Breast epithelium (tissue), 4 donors: ENCODE measurements at regions of chr17 and their contacts with region 1.

Region 1: GRCh38 chr17:64320613-64321553 is 57.8 kb upstream of the TEX2 start:
- DNase-seq: peak in 1 of 2 donors; percentile 47
- H3K4me3 ChIP-seq: peak overlapping the region in 1 of 3 donors; percentile 52
- H3K27ac ChIP-seq: peak overlapping the region; percentile 17 to 78
- H3K4me1 ChIP-seq: no peaks in the 10 kb centered on the region
- H3K27me3 ChIP-seq: no peaks in the 10 kb centered on the region
- CTCF ChIP-seq: peak; percentile 80 to 83 (median 83)
- POLR2A ChIP-seq: no peak

Region 2: DNA sequence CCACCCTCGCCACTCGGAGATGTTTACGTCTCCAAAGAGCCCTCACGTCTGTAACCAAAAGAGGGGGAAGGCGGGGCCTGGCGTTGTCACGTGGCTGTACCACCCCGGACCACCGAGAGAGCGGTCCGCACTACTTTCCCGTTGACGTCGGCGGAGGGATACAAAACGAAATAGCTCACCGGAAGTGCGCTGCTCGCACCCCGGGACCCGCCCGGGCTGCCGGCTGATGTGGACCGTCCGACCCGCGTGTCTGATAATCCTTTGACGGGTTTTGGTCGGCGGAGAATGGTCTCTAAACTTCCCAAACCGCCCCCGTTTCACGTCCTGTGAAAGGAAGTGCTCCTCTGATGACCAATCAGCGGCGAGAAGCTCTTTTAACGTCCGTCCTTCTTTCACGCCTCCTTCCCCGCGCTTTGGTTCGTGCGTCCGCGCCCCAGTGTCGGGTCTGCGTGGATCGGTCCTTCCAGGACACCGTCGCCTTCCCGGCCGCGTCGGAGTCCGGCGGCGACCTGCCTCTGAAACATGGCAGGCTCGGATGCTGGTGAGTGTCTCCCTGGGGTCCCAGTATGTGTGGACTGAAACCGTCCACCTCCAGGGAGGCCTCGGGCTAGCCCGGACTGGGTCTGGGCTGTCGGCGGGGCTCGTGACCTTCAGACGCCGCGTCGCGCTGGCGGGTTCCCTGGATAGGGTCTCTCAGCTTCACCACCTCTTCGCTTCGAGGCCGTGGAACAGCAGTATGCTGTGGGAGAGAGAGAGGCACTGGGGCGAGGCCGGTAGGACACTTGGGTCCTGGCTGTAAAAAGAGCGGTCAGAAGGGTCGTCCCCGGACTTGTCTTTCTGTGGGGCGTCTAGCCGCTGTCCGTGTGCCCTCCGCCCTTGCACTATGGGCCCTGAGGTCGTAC is 185.9 kb after region 1 on chr17 and contains the start of gene CEP95:
- intact Hi-C with region 1: loop called (anchors 10 kb)
- DNase-seq: peak; percentile 92 to 97
- H3K4me3 ChIP-seq: peak within 1 kb of the TSS; percentile 75 to 91 (median 83)
- H3K27ac ChIP-seq: peak within 1 kb of the TSS; percentile 99 to 100
- H3K4me1 ChIP-seq: peaks cover 0 to 17% of the 10 kb centered on the region in 2 donors
- H3K27me3 ChIP-seq: no peaks in the 10 kb centered on the region
- CTCF ChIP-seq: no peak
- POLR2A ChIP-seq: peak; percentile 92
- total RNA-seq, gene CEP95: 56.5 to 74.4 (median 73.2) TPM